ENCODE measurements at regions of chr1 and their contacts with region 1.

Region 1: DNA sequence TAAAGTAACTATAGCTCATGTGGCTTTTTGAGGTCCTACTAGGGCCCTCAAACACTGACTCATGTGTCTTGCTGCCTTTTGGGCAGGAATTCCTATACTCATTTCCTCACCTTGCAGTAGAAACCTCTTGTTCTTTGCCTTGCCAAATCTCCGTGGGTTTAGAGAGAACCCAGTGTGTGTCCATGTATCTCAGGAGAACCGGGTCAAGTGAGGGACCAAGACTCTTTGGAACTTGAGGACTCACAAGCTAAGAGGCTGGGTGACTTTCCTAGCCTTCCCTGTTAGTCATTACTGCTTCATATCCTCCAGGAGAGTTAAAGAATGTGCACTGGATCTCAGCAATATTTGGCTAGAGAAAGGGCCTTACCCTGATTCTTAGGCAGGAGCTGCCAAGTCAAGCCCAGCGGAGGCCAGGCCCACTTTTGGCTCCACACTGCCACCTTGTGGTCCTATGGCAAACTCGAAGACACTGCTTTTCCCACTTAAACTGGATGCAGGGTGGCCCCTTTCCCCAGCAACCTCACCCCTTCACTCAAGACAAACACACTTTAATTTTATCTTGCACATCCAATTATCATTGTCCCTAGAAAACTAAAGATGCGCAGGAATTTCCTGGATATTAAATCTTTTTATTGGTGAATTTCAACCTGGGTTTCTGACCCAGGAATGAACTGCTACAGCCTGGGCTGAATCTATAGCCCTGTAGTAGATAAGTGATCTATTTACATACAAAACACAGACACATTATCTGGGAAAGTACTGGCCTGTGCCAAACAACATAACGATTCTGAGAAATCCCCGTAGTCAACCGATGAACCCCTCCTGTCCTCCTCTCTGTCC is 10.6 kb downstream of the AVPR1B start:
- DNase-seq: peak; percentile 53 to 87 (median 81)
- ATAC-seq: peak; percentile 91 to 97 (median 93)
- H3K4me3 ChIP-seq: no peak overlapping the region
- H3K27ac ChIP-seq: no peak overlapping the region
- H3K4me1 ChIP-seq: no peaks in the 10 kb centered on the region
- H3K27me3 ChIP-seq: no peaks in the 10 kb centered on the region
- CTCF ChIP-seq: peak; percentile 65 to 81 (median 76)

Region 2: GRCh38 chr1:206029484-206029883 is 77.1 kb before region 1 on chr1:
- intact Hi-C with region 1: loop called in 1 of 3 experiments (anchors 5 kb)
- DNase-seq: no peak
- ATAC-seq: peak in 3 of 4 donors; percentile 45 to 67 (median 52)
- H3K4me3 ChIP-seq: no peak overlapping the region
- H3K27ac ChIP-seq: no peak overlapping the region
- H3K4me1 ChIP-seq: no peaks in the 10 kb centered on the region
- H3K27me3 ChIP-seq: no peaks in the 10 kb centered on the region
- CTCF ChIP-seq: no peak

Region 3: DNA sequence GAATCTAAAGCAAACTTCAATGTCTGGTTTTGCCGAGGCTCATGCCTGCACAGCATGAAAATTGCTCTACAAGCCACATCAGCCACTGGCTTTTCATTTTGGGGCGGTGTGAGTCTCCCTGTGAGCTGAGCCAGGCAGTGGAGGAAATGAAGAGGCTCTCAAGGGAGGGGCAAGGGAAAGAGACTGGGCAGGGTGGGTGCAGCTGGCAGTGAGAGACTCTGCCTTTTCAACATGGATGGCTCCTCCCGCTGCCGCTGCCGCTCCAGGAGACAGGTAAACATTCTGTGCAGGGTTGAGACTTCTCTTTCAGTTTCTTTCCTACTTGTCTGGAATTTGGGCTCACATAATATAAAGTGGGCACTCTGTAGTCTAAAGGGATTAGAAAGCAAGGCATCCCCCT is 71.5 kb before region 1 on chr1:
- intact Hi-C with region 1: loop called in 1 of 3 experiments (anchors 5 kb)
- DNase-seq: no peak
- ATAC-seq: peak in 2 of 4 donors; percentile 12 to 19
- H3K4me3 ChIP-seq: no peak overlapping the region
- H3K27ac ChIP-seq: no peak overlapping the region
- H3K4me1 ChIP-seq: no peaks in the 10 kb centered on the region
- H3K27me3 ChIP-seq: no peaks in the 10 kb centered on the region
- CTCF ChIP-seq: no peak